Dorsolateral prefrontal cortex (tissue), 120 donors: ENCODE measurements at regions of chr10 and their contacts with region 1.

Region 1: GRCh38 chr10:27658788-27659187 is 86.8 kb downstream of the MKX start:
- DNase-seq: no peak
- H3K4me3 ChIP-seq: no peak overlapping the region
- H3K27ac ChIP-seq: no peak overlapping the region
- H3K27me3 ChIP-seq: peaks cover 0 to 8% (median 0%) of the 10 kb centered on the region in 45 donors
- CTCF ChIP-seq: no peak

Region 2: DNA sequence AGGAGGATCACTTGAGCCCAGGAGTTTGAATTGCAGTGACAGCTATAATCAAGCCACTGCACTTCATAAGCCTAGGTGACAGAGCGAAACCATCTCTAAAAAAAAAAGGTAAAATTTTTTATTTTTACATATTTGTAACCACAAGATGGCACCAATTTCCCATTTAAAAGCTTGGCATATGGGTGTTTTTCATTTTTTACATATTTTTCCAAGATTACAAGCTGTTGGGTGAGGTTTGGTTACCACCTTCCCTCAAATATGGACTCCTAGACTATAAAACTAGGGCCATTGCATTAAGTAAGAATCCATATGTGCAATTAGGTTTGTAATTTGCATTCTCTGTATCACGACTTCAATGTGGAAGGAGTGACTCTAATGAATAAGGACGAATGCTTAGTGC is 288.9 kb before region 1 on chr10:
- intact Hi-C with region 1: loop called in 1 of 2 experiments (anchors 5 kb)
- DNase-seq: no peak
- H3K4me3 ChIP-seq: no peak overlapping the region
- H3K27ac ChIP-seq: no peak overlapping the region
- H3K27me3 ChIP-seq: peaks cover 0 to 13% (median 0%) of the 10 kb centered on the region in 45 donors
- CTCF ChIP-seq: peak in 46 of 56 donors; percentile 4 to 57 (median 37)

Region 3: DNA sequence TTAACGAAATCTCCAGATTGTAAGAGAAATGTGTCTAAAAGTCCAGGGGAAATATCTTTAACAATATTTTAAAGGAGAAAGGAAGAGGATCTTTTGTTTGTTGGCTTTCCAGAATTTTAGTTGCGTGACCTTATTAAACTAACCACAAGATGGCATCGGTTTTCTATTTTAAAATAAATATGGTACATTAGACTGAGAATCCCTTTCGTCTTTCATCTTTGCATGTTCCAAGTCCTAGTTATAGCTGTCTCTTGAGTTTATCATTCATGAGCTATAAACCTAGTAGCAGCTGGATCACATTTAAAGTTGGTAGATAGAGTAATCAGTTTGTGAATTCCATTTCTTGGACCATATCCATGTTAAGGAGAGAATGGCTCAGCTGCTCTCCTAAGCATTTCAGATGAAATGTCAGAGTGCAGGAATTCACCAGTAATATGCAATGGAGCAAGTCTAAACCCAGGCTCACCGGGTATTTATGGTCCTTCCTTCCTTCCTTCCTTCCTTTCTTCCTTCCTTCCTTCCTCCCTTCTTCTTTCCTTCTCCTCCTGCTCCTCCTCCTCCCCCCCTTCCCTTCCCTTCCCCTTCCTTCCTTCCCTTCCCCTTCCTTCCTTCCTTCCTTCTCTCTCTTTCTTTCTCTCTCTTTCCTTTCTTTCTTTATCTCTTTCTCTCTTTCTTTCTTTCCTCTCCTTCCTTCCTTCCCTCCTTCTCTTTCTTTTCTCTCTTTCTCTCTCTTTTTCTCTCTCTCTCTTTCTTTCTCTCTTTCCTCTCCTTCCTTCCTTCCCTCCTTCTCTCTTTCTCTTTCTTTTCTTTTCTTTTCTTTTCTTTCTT is 212.5 kb before region 1 on chr10:
- intact Hi-C with region 1: loop called in 1 of 2 experiments (anchors 2 kb)
- DNase-seq: no peak
- H3K4me3 ChIP-seq: peak overlapping the region in 4 of 59 donors; percentile 9 to 25 (median 14)
- H3K27ac ChIP-seq: no peak overlapping the region
- H3K27me3 ChIP-seq: no peaks in the 10 kb centered on the region
- CTCF ChIP-seq: peak in 54 of 56 donors; percentile 19 to 75 (median 54)

Region 4: DNA sequence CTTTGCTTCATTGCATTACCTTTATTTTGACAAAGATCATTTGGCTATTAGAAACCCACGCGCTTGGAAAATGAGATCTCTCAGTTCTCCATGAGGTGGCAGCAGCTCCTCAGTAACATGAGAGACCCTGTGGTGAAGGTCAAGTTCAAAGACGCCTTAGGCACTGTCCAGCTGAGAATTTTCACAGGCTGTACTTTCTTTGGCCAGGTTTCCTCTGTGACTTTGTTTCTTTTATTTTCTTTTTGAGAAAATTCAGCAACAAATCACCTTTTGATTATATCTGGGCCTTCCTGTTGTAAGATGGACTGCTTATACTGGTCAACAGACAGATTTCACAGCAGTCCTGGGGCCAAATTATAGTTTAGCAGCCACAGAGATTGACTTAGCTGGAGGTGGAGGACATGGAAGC is 100.2 kb before region 1 on chr10:
- intact Hi-C with region 1: loop called in 1 of 2 experiments (anchors 5 kb)
- DNase-seq: peak in 4 of 10 donors; percentile 8 to 44 (median 25)
- H3K4me3 ChIP-seq: no peak overlapping the region
- H3K27ac ChIP-seq: no peak overlapping the region
- H3K27me3 ChIP-seq: no peaks in the 10 kb centered on the region
- CTCF ChIP-seq: peak in 55 of 56 donors; percentile 29 to 83 (median 65)